Activated CD4-positive, alpha-beta T cell treated with anti-CD3 and anti-CD28 coated beads, Interleukin-2, amount 10 ng/mL, durations not matched to agents 24 days and 14 days (primary cell): ENCODE measurements at regions of chr10 and their contacts with region 1.

Region 1: DNA sequence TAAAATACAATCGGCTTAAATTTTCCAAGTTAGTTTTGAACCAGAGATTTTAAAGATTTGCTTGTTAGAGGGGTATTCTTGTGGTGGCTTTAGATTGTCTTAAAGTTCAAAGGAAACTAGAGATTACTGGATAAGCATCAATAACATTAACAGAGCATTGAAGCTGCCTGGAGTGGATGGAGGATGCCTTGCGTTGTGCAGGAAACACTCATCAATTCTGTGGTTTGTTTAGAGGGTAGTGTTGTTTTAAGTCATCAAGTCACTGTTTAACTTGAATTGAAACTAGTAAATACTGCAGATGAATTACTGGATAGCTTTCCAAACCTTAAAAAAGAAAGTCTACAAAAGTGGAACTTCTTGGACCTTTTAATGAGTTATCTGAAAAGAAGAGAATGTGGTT is 218.6 kb downstream of the CELF2 start:
- DNase-seq: peak; percentile 81
- H3K4me3 Mint-ChIP-seq: peak overlapping the region; percentile 78
- H3K27ac Mint-ChIP-seq: peak overlapping the region; percentile 96
- H3K4me1 Mint-ChIP-seq: peaks cover 74% of the 10 kb centered on the region
- H3K27me3 Mint-ChIP-seq: no peaks in the 10 kb centered on the region

Region 2: GRCh38 chr10:11086177-11086865 is 149.9 kb before region 1 on chr10:
- intact Hi-C with region 1: no loop called
- DNase-seq: no peak
- H3K4me3 Mint-ChIP-seq: no peak overlapping the region
- H3K27ac Mint-ChIP-seq: no peak overlapping the region
- H3K4me1 Mint-ChIP-seq: no peaks in the 10 kb centered on the region
- H3K27me3 Mint-ChIP-seq: peaks cover 6% of the 10 kb centered on the region

Region 3: GRCh38 chr10:11170993-11171851 is 65.0 kb before region 1 on chr10:
- intact Hi-C with region 1: loop called (anchors 1 kb)
- DNase-seq: peak; percentile 78
- H3K4me3 Mint-ChIP-seq: no peak overlapping the region
- H3K27ac Mint-ChIP-seq: no peak overlapping the region
- H3K4me1 Mint-ChIP-seq: peaks cover 47% of the 10 kb centered on the region
- H3K27me3 Mint-ChIP-seq: no peaks in the 10 kb centered on the region

Region 4: GRCh38 chr10:11178606-11179515 is 57.4 kb before region 1 on chr10:
- intact Hi-C with region 1: loop called (anchors 1 kb)
- DNase-seq: peak; percentile 96
- H3K4me3 Mint-ChIP-seq: no peak overlapping the region
- H3K27ac Mint-ChIP-seq: peak overlapping the region; percentile 94
- H3K4me1 Mint-ChIP-seq: peaks cover 90% of the 10 kb centered on the region
- H3K27me3 Mint-ChIP-seq: no peaks in the 10 kb centered on the region

Region 5: GRCh38 chr10:11209830-11210181 is 26.4 kb before region 1 on chr10:
- intact Hi-C with region 1: loop called (anchors 1 kb)
- DNase-seq: peak; percentile 64
- H3K4me3 Mint-ChIP-seq: peak overlapping the region; percentile 74
- H3K27ac Mint-ChIP-seq: peak overlapping the region; percentile 97
- H3K4me1 Mint-ChIP-seq: peaks cover 86% of the 10 kb centered on the region
- H3K27me3 Mint-ChIP-seq: no peaks in the 10 kb centered on the region

Region 6: DNA sequence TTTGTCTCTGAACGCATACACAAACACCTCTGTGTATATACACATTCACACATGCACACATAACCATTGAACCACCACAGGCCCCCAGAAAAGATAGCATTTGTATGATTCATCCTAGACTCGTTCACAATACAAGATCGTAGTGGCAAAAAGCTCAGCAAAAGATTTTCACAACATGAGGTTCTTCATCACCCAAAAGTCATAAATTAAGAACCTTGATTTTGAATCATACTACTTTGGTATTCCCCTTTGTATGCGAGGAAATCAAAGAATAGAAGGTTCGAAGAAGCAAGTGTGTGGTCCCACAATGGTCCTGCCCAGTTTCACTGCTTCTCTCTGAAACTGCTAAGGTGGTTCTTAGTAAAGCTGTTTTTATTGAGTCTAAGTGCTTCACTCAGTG is 17.8 kb before region 1 on chr10:
- intact Hi-C with region 1: loop called (anchors 1 kb)
- DNase-seq: no peak
- H3K4me3 Mint-ChIP-seq: peak overlapping the region; percentile 10
- H3K27ac Mint-ChIP-seq: peak overlapping the region; percentile 81
- H3K4me1 Mint-ChIP-seq: peaks cover 59% of the 10 kb centered on the region
- H3K27me3 Mint-ChIP-seq: no peaks in the 10 kb centered on the region

Region 7: GRCh38 chr10:11225935-11226334 is 10.3 kb before region 1 on chr10:
- intact Hi-C with region 1: loop called (anchors 1 kb)
- DNase-seq: peak; percentile 87
- H3K4me3 Mint-ChIP-seq: peak overlapping the region; percentile 66
- H3K27ac Mint-ChIP-seq: peak overlapping the region; percentile 92
- H3K4me1 Mint-ChIP-seq: peaks cover 71% of the 10 kb centered on the region
- H3K27me3 Mint-ChIP-seq: no peaks in the 10 kb centered on the region

Region 8: DNA sequence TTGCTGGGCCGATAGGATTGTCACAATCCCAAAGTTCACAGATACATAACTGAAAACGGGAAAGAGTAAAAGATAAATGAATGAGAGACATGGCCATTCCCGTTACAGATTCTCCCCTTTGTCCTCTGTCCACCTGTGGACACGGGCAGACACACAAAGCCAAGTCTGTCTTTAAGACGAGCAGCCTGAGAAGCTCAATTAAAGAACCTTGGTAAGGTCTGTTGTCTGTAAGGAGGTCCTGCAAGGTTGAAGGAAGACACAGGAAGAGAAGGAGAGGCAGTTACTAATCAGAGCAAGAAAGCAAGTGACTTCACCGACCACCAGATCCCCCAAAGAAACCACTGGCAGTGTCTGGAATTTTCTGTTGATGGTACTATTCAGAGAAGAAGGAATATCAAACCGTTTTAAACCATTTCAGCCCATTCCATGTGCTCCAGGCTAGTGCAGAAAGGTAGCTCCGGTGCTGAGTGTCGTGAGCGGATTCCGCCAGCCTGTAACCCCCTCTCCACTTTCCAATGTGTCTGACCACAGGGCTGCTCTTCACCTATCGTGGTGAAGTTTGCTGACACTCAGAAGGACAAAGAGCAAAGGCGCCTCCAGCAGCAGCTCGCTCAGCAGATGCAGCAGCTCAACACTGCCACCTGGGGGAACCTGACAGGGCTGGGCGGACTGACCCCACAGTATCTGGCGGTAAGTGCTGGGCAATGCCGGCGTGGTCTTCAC is 34.1 kb after region 1 on chr10:
- intact Hi-C with region 1: loop called (anchors 2 kb)
- DNase-seq: peak; percentile 87
- H3K4me3 Mint-ChIP-seq: no peak overlapping the region
- H3K27ac Mint-ChIP-seq: peak overlapping the region; percentile 78
- H3K4me1 Mint-ChIP-seq: peaks cover 50% of the 10 kb centered on the region
- H3K27me3 Mint-ChIP-seq: no peaks in the 10 kb centered on the region